CD8-positive, alpha-beta T cell (primary cell): ENCODE measurements at regions of chr14 and their contacts with region 1.

Region 1: GRCh38 chr14:73553845-73554244 is 4.9 kb downstream of the HEATR4 start:
- DNase-seq: no peak
- ATAC-seq: no peak
- H3K4me3 ChIP-seq: no peak overlapping the region
- H3K4me3 Mint-ChIP-seq: no peak overlapping the region
- H3K27ac ChIP-seq: no peak overlapping the region
- H3K27ac Mint-ChIP-seq: no peak overlapping the region
- H3K4me1 ChIP-seq: no peaks in the 10 kb centered on the region
- H3K4me1 Mint-ChIP-seq: no peaks in the 10 kb centered on the region
- H3K27me3 ChIP-seq: no peaks in the 10 kb centered on the region
- H3K27me3 Mint-ChIP-seq: no peaks in the 10 kb centered on the region
- CTCF ChIP-seq: no peak

Region 2: DNA sequence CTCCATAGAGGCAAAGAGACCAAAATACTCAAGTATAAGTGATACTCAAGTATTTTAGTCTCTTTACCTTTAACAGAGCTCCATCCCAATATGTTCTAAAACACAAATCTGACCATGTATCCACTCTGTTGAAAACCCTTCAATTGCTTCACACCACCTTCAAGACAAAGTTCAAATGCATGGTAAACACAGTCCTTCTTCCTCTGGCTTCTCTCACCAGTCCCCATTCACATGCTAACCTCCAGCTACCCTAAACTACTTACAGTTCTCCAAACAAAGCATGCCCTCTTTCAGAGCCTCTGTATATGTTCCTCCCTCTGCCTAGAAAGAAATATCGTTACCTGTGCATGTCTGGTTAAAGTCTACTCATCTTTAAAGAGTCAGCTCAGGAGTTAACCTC is 195.7 kb before region 1 on chr14:
- CTCF ChIA-PET with region 1: no interaction called
- POLR2A ChIA-PET with region 1: no interaction called
- intact Hi-C with region 1: no loop called
- DNase-seq: no peak
- ATAC-seq: no peak
- H3K4me3 ChIP-seq: no peak overlapping the region
- H3K4me3 Mint-ChIP-seq: no peak overlapping the region
- H3K27ac ChIP-seq: no peak overlapping the region
- H3K27ac Mint-ChIP-seq: peak overlapping the region; percentile 17
- H3K4me1 ChIP-seq: no peaks in the 10 kb centered on the region
- H3K4me1 Mint-ChIP-seq: peaks cover 2% of the 10 kb centered on the region
- H3K27me3 ChIP-seq: no peaks in the 10 kb centered on the region
- H3K27me3 Mint-ChIP-seq: no peaks in the 10 kb centered on the region
- CTCF ChIP-seq: no peak

Region 3: DNA sequence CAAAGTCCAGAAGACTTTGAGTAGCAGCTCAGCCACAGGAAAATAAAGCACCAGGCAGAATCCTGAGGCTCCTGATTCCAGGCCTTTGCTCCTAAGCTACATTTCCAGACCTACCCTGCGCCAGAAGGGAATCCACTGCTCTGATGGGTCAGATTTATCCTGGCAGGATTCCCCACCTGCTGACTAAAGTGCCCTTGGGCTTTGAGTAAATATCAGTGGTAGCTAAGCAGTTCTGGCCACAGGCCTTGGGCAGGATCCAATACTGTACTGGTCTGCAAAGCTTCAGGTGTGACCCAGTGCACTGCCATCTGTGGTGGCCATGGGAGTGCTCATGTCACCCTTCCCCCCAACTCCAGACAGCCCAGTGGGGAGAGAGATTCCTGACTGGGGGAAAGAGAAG is 27.3 kb before region 1 on chr14:
- CTCF ChIA-PET with region 1: no interaction called
- POLR2A ChIA-PET with region 1: no interaction called
- intact Hi-C with region 1: loop called in 1 of 2 experiments (anchors 1 kb)
- DNase-seq: no peak
- ATAC-seq: no peak
- H3K4me3 ChIP-seq: no peak overlapping the region
- H3K4me3 Mint-ChIP-seq: no peak overlapping the region
- H3K27ac ChIP-seq: no peak overlapping the region
- H3K27ac Mint-ChIP-seq: no peak overlapping the region
- H3K4me1 ChIP-seq: no peaks in the 10 kb centered on the region
- H3K4me1 Mint-ChIP-seq: no peaks in the 10 kb centered on the region
- H3K27me3 ChIP-seq: no peaks in the 10 kb centered on the region
- H3K27me3 Mint-ChIP-seq: no peaks in the 10 kb centered on the region
- CTCF ChIP-seq: no peak